AG04450 (cell line): ENCODE measurements at regions of chr2 and their contacts with region 1.

Region 1: GRCh38 chr2:151437630-151438029 is 27.9 kb downstream of the RIF1 start:
- DNase-seq: no peak
- H3K4me3 ChIP-seq: no peak overlapping the region
- H3K27ac ChIP-seq: no peak overlapping the region
- H3K27me3 ChIP-seq: no peaks in the 10 kb centered on the region
- CTCF ChIP-seq: peak; percentile 55

Region 2: DNA sequence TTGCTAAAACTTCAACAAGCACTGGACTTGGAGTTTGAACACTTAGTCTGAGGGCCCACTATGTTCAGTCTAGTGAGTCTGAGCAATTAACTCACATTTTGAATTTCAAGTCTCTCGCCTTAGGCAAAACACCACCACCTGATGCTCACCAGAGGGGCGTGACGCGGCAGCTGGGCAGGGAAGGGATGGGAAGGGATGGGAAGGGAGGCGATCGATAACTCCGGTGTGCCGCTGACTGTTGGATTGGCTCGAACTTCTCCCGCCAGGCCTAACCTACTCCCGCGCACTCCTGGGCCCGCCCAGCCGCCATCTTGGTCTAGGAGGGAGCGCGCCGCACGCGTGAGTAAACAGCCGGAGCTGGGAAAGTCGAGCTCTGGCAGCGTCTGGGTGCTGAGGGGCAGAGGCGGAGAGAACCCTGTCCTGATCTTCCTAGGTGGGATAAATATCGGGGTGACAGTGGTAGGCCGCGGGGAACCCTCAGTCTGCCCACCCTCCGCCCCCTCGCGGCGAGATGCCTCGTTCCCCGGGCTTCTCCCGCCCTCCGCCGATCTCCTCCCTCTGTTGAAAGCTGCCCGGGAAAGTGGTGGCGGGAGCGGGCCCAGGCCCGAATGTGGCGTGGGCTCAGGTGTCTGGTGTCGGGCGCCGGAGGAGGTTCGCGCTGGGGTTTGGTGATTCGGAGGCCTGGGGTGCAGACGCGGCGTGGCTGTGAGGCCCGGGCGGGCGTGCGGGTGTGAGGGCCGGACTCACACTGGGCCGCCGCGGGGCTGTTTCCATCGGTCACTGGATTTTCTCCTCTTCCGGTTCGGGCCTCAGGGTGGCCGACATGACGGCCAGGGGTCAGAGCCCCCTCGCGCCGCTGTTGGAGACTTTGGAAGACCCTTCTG is 27.8 kb before region 1 on chr2 and contains the start of gene RIF1:
- CTCF ChIA-PET with region 1: interaction called, 18 read pairs
- POLR2A ChIA-PET with region 1: interaction called, 4 read pairs
- DNase-seq: peak; percentile 73
- H3K4me3 ChIP-seq: peak within 1 kb of the TSS; percentile 96
- H3K27ac ChIP-seq: peak within 1 kb of the TSS; percentile 90
- H3K27me3 ChIP-seq: no peaks in the 10 kb centered on the region
- CTCF ChIP-seq: peak; percentile 71
- polyA plus RNA-seq, gene RIF1: 10.2 and 15.0 TPM in 2 replicates

Region 3: GRCh38 chr2:151422917-151423439 is 14.7 kb before region 1 on chr2:
- CTCF ChIA-PET with region 1: interaction called, 27 read pairs
- POLR2A ChIA-PET with region 1: interaction called, 5 read pairs
- DNase-seq: no peak
- H3K4me3 ChIP-seq: no peak overlapping the region
- H3K27ac ChIP-seq: no peak overlapping the region
- H3K27me3 ChIP-seq: no peaks in the 10 kb centered on the region
- CTCF ChIP-seq: no peak

Region 4: DNA sequence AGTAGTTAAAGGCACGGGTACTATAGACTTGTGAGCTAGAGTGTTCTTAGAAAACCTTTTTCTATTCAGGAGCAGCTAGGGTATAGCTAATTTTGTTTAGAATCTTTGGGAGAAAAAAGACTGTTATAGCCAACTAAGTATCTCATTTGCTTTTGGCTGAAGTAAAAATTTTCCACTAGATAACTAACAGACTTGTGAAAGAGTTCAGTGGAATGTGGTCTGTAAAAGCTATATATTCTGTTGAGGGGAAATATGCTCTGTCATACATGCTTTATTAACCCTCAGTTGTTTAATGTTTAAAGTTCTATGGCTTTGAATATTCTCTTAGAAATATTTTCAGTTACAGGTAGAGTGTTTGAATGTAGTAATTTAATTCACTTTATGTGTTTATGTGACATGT is 21.7 kb after region 1 on chr2:
- CTCF ChIA-PET with region 1: interaction called, 10 read pairs
- POLR2A ChIA-PET with region 1: no interaction called
- DNase-seq: no peak
- H3K4me3 ChIP-seq: no peak overlapping the region
- H3K27ac ChIP-seq: no peak overlapping the region
- H3K27me3 ChIP-seq: no peaks in the 10 kb centered on the region
- CTCF ChIP-seq: no peak

Region 5: GRCh38 chr2:151475071-151475470 is 37.4 kb after region 1 on chr2:
- CTCF ChIA-PET with region 1: interaction called, 17 read pairs
- POLR2A ChIA-PET with region 1: no interaction called
- DNase-seq: no peak
- H3K4me3 ChIP-seq: no peak overlapping the region
- H3K27ac ChIP-seq: no peak overlapping the region
- H3K27me3 ChIP-seq: no peaks in the 10 kb centered on the region
- CTCF ChIP-seq: no peak